Mammary epithelial cell (primary cell): ENCODE measurements at regions of chr15 and their contacts with region 1.

Region 1: GRCh38 chr15:41811432-41812195 is 16.3 kb upstream of the JMJD7 start:
- DNase-seq: peak; percentile 60
- H3K4me3 ChIP-seq: no peak overlapping the region
- H3K27ac ChIP-seq: no peak overlapping the region
- H3K4me1 ChIP-seq: peaks cover 24% of the 10 kb centered on the region
- H3K27me3 ChIP-seq: no peaks in the 10 kb centered on the region
- CTCF ChIP-seq: peak; percentile 87 to 93

Region 2: GRCh38 chr15:41476416-41477048 is 335.1 kb before region 1 on chr15:
- CTCF ChIA-PET with region 1: no interaction called
- dilution Hi-C with region 1: loop called (anchors 5 kb)
- in situ Hi-C with region 1: no loop called
- intact Hi-C with region 1: no loop called
- DNase-seq: no peak
- H3K4me3 ChIP-seq: no peak overlapping the region
- H3K27ac ChIP-seq: no peak overlapping the region
- H3K4me1 ChIP-seq: no peaks in the 10 kb centered on the region
- H3K27me3 ChIP-seq: no peaks in the 10 kb centered on the region
- CTCF ChIP-seq: no peak

Region 3: GRCh38 chr15:41570764-41571163 is 240.8 kb before region 1 on chr15:
- CTCF ChIA-PET with region 1: interaction called, 3 read pairs
- dilution Hi-C with region 1: loop called (anchors 5 kb)
- in situ Hi-C with region 1: no loop called
- intact Hi-C with region 1: no loop called
- DNase-seq: no peak
- H3K4me3 ChIP-seq: no peak overlapping the region
- H3K27ac ChIP-seq: no peak overlapping the region
- H3K4me1 ChIP-seq: no peaks in the 10 kb centered on the region
- H3K27me3 ChIP-seq: no peaks in the 10 kb centered on the region
- CTCF ChIP-seq: no peak

Region 4: DNA sequence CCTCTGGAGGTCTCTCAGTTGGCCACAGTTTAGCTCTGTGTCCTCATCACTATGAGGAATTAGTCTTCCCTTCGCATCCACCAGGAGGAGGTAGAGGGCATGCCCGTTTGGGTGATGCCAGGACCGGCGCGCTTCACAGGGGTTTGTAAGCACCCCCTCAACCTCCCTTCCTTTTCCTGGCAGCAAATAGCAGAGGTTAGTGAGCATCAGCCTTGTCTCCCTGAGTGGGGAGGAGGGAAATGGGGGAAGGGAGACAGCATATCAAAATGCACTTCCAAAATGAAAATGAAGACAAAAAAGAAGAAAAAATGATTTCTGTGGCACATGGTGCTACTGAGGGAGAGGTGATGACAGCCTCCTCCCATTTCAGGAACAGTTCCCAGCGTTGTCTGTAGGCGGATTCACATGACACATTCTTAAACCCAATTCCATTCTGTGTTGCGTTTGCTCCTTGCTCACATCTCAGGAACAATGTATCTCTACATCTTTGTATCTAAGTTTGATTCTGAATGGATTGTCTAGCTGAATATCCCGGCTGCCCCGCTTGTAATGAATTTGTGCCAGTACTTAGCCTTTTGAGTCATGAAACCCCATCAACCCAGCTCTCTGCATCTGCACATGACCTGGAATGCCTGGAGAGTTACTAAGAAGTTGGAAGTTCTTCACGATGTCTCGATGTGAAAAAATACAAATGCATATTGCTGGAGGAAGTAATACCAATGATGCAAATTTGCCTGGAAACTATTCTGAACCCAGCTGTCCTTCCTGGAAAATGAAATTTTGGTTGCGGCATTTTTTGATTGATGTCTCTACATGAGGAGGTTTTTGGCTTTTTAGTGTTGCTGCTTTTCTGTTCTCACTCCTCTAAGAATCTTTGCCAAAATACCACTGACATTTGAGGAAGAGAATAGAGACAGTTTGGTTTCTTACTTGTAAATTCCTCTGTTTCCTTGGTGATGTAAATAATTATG is 207.4 kb before region 1 on chr15:
- CTCF ChIA-PET with region 1: interaction called, 5 read pairs
- dilution Hi-C with region 1: no loop called
- in situ Hi-C with region 1: no loop called
- intact Hi-C with region 1: loop called (anchors 1 kb)
- DNase-seq: peak; percentile 67
- H3K4me3 ChIP-seq: peak overlapping the region; percentile 16 to 22 (median 16)
- H3K27ac ChIP-seq: no peak overlapping the region
- H3K4me1 ChIP-seq: peaks cover 13% of the 10 kb centered on the region
- H3K27me3 ChIP-seq: no peaks in the 10 kb centered on the region
- CTCF ChIP-seq: peak; percentile 82 to 86

Region 5: GRCh38 chr15:41870689-41871081 is 59.1 kb after region 1 on chr15:
- CTCF ChIA-PET with region 1: no interaction called
- dilution Hi-C with region 1: no loop called
- in situ Hi-C with region 1: no loop called
- intact Hi-C with region 1: no loop called
- DNase-seq: peak; percentile 13
- H3K4me3 ChIP-seq: no peak overlapping the region
- H3K27ac ChIP-seq: no peak overlapping the region
- H3K4me1 ChIP-seq: peaks cover 10% of the 10 kb centered on the region
- H3K27me3 ChIP-seq: no peaks in the 10 kb centered on the region
- CTCF ChIP-seq: no peak

Region 6: DNA sequence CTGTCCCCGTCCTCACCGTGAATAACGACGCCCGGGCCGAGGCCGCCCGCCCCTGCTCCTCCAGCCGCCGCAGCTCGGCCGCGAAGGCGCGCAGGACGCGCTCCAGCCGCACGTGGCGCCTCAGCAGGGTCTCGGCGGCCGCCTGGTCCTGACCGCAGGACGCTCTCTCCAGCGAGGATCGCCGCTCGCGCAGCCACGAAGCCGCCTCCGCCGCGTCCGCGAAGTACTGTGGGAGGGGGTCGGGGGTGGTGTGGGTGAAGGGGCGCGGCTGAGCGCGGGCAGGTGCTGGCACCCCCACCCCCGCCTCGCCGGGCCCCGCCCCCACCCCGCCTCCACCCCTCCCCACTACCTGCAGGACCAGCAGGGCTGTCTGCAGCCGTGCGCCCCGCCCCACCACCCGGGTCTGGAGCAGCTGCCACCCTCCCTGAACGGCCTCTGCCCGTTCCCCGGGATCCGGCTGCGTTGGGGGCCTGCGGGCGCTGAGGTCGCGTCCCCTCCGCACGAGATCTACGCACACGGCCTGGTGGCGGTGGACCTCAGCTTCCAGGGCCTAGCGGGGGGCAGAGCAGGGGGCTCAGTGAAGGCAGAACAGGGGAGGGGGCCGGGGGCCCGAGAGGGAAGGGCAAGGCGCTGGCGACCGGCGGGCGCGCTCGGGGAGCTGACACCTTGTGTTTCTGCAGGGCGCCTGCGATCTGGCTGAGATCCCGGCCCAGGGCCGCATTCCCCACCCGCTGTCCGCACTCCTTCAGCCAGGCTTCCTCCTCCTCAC is 70.5 kb after region 1 on chr15:
- CTCF ChIA-PET with region 1: no interaction called
- dilution Hi-C with region 1: loop called (anchors 10 kb)
- in situ Hi-C with region 1: no loop called
- intact Hi-C with region 1: no loop called
- DNase-seq: no peak
- H3K4me3 ChIP-seq: no peak overlapping the region
- H3K27ac ChIP-seq: no peak overlapping the region
- H3K4me1 ChIP-seq: no peaks in the 10 kb centered on the region
- H3K27me3 ChIP-seq: no peaks in the 10 kb centered on the region
- CTCF ChIP-seq: no peak